Caco-2 (cell line): ENCODE measurements at regions of chr11 and their contacts with region 1.

Region 1: GRCh38 chr11:62591448-62592145 is at the start of gene TUT1:
- DNase-seq: peak; percentile 98
- H3K4me3 ChIP-seq: peak within 1 kb of the TSS; percentile 51
- H3K4me3 Mint-ChIP-seq: peak within 1 kb of the TSS; percentile 88
- H3K27ac Mint-ChIP-seq: peak within 1 kb of the TSS; percentile 95
- H3K4me1 ChIP-seq: peaks cover 36% of the 10 kb centered on the region
- H3K4me1 Mint-ChIP-seq: peaks cover 18% of the 10 kb centered on the region
- H3K27me3 ChIP-seq: no peaks in the 10 kb centered on the region
- H3K27me3 Mint-ChIP-seq: no peaks in the 10 kb centered on the region
- CTCF ChIP-seq: no peak
- total RNA-seq, gene TUT1: 27.2 and 30.2 TPM in 2 replicates

Region 2: GRCh38 chr11:62394825-62395538 is 196.6 kb before region 1 on chr11:
- CTCF ChIA-PET with region 1: interaction called, 10 read pairs
- POLR2A ChIA-PET with region 1: interaction called, 13 read pairs
- intact Hi-C with region 1: no loop called
- DNase-seq: peak; percentile 72 to 80
- H3K4me3 ChIP-seq: no peak overlapping the region
- H3K4me3 Mint-ChIP-seq: no peak overlapping the region
- H3K27ac Mint-ChIP-seq: peak overlapping the region; percentile 38
- H3K4me1 ChIP-seq: peaks cover 65% of the 10 kb centered on the region
- H3K4me1 Mint-ChIP-seq: peaks cover 32% of the 10 kb centered on the region
- H3K27me3 ChIP-seq: no peaks in the 10 kb centered on the region
- H3K27me3 Mint-ChIP-seq: no peaks in the 10 kb centered on the region
- CTCF ChIP-seq: peak; percentile 66 to 74

Region 3: GRCh38 chr11:62551696-62552250 is 39.8 kb before region 1 on chr11:
- CTCF ChIA-PET with region 1: interaction called, 12 read pairs
- POLR2A ChIA-PET with region 1: interaction called, 11 read pairs
- intact Hi-C with region 1: no loop called
- DNase-seq: peak; percentile 74 to 77
- H3K4me3 ChIP-seq: no peak overlapping the region
- H3K4me3 Mint-ChIP-seq: peak overlapping the region; percentile 71
- H3K27ac Mint-ChIP-seq: peak overlapping the region; percentile 96
- H3K4me1 ChIP-seq: peaks cover 87% of the 10 kb centered on the region
- H3K4me1 Mint-ChIP-seq: peaks cover 61% of the 10 kb centered on the region
- H3K27me3 ChIP-seq: no peaks in the 10 kb centered on the region
- H3K27me3 Mint-ChIP-seq: no peaks in the 10 kb centered on the region
- CTCF ChIP-seq: no peak

Region 4: GRCh38 chr11:62612366-62613290 is 21.0 kb after region 1 on chr11 and contains the starts of genes EML3 and ROM1:
- CTCF ChIA-PET with region 1: interaction called, 19 read pairs
- POLR2A ChIA-PET with region 1: interaction called, 6 read pairs
- intact Hi-C with region 1: loop called (anchors 1 kb)
- DNase-seq: peak; percentile 93
- H3K4me3 ChIP-seq: peak within 1 kb of the TSS; percentile 87
- H3K4me3 Mint-ChIP-seq: peak within 1 kb of the TSS; percentile 97
- H3K27ac Mint-ChIP-seq: peak within 1 kb of the TSS; percentile 93
- H3K4me1 ChIP-seq: peaks cover 30% of the 10 kb centered on the region
- H3K4me1 Mint-ChIP-seq: peaks cover 33% of the 10 kb centered on the region
- H3K27me3 ChIP-seq: no peaks in the 10 kb centered on the region
- H3K27me3 Mint-ChIP-seq: no peaks in the 10 kb centered on the region
- CTCF ChIP-seq: peak; percentile 99
- total RNA-seq, gene EML3: 61.2 and 68.7 TPM in 2 replicates
- total RNA-seq, gene ROM1: 1.1 and 1.3 TPM in 2 replicates

Region 5: DNA sequence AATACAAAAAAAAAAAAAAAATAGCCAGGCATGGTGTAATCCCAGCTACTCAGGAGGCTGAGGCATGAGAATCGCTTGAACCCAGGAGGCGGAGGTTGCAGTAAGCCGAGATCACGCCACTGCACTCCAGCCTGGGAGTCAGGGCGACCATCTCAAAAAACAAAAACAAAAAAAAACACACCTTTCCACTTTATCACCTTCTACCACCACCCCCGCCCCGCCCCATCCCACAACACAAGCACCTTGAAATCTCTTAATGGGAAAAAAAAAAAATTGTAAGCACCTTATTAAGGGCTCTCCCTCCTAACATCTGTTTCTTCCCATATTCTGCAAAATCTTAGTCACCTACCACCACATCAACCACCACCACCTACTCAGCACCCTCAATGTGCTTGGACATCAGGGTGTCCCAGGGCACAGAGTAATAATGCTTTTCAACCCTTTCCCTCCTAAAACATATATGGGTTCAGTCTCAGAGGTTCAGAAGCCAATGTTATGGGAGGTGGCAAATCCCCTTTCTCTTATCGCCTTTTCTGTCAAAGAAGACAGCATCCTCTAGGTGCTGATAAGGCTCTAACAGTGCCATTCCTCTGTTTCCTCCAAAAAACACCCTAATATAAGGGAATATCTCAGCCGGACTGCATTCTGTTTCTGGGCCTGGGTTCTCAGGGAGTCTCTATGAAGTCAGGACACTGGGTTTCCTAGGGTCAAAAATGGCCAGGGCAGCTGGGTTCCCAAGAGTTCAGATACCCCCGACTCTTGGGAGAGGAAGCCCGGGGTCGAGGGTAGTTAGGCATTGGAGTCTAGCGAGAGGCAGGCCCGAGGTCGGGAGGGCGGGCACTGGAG is 60.8 kb after region 1 on chr11:
- CTCF ChIA-PET with region 1: no interaction called
- POLR2A ChIA-PET with region 1: interaction called, 16 read pairs
- intact Hi-C with region 1: loop called (anchors 2 kb)
- DNase-seq: no peak
- H3K4me3 ChIP-seq: peak overlapping the region; percentile 80
- H3K4me3 Mint-ChIP-seq: peak overlapping the region; percentile 75
- H3K27ac Mint-ChIP-seq: peak overlapping the region; percentile 95
- H3K4me1 ChIP-seq: peaks cover 10% of the 10 kb centered on the region; the same call in 1 of the 2 replicates
- H3K4me1 Mint-ChIP-seq: peaks cover 7% of the 10 kb centered on the region
- H3K27me3 ChIP-seq: no peaks in the 10 kb centered on the region
- H3K27me3 Mint-ChIP-seq: no peaks in the 10 kb centered on the region
- CTCF ChIP-seq: no peak

Region 6: DNA sequence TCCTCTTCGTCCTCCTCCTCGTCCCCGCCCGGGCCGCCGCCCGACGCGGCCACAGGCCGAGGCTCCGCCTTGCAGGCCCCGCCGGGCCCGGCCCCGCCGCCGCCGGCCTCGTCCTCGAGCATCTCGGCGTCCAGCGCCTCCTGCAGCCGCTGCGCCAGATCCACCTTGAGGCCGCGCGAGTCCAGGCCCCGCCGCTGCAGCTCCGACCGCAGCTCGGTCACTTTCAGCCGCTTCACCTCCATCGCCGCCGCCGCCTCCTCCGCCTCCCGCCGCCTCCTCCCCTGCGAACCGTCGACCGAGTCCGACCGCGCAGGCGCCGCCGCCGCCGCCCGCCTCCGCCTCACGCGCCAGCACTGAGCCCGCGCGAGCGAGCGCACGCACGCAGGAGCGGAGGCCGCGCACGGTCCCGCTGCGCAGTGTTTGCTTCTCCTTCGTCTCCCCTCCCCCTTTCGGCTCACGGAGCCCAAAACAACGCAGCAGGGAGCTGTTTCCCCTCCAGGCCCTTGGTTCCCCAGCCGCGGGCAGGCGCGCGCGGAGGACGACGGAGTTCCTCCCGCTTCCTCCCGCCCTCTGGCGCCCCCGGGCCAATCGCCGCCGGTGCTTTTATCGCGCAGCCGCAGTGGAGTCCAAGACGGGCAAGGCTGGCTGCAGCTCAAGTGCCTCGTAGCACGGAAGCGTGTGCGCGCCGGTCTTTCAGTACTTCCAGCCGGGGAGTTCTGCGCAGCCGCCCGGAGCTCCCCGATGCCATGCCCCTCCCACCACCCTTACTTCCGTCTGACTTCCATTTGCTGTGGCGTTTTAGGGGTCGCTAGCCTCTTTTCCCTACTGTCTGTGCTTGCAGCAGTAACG is 135.5 kb after region 1 on chr11 and contains the start of gene HNRNPUL2:
- CTCF ChIA-PET with region 1: interaction called, 4 read pairs
- POLR2A ChIA-PET with region 1: interaction called, 10 read pairs
- intact Hi-C with region 1: no loop called
- DNase-seq: peak; percentile 99
- H3K4me3 ChIP-seq: peak within 1 kb of the TSS; percentile 94
- H3K4me3 Mint-ChIP-seq: peak within 1 kb of the TSS; percentile 99
- H3K27ac Mint-ChIP-seq: peak within 1 kb of the TSS; percentile 98
- H3K4me1 ChIP-seq: peaks cover 22% of the 10 kb centered on the region
- H3K4me1 Mint-ChIP-seq: peaks cover 27% of the 10 kb centered on the region
- H3K27me3 ChIP-seq: no peaks in the 10 kb centered on the region
- H3K27me3 Mint-ChIP-seq: no peaks in the 10 kb centered on the region
- CTCF ChIP-seq: no peak
- total RNA-seq, gene HNRNPUL2: 60.0 and 62.9 TPM in 2 replicates

Region 7: DNA sequence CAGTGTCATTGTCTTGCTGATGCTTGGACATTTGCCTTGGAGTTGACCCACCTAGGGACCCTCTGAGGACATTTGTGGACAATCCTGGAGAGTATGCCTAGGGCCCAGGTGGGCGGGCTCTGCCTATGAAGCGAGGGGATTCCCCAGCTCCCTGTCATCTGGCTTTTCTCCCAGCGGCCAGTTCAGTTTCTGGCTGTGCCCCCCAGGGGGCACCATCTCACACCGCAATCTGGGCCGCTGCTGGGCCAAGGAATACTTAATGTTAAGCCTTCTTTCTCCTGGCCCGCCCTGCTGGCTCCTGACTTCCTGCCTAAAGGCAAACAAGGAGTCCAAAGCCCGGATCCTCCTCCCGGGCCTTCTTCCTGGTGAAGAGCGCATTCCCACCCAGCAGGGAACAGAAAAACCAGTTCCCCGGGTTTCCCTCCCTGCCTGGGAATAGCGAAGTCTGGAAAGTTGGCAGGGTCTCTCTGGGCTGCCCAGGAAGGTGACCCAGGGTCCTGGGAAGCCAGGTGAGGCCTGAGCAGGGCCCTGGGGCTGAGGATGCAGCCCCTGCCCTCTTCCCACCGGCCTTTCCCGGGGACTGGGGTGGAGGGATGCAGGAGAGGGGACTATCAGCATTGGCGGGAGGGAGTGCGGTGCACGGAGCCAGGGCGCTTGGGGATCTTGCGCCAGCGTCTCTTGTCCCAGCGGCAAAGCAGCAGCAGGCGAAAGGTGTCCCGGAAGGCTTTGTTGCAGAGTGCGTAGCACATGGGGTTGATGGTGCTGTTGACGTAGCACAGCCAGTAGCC is 317.7 kb after region 1 on chr11:
- CTCF ChIA-PET with region 1: no interaction called
- POLR2A ChIA-PET with region 1: no interaction called
- intact Hi-C with region 1: no loop called
- DNase-seq: peak; percentile 75 to 89
- H3K4me3 ChIP-seq: no peak overlapping the region
- H3K4me3 Mint-ChIP-seq: no peak overlapping the region
- H3K27ac Mint-ChIP-seq: peak overlapping the region; percentile 48
- H3K4me1 ChIP-seq: peaks cover 9% of the 10 kb centered on the region; the same call in 1 of the 2 replicates
- H3K4me1 Mint-ChIP-seq: peaks cover 5% of the 10 kb centered on the region
- H3K27me3 ChIP-seq: no peaks in the 10 kb centered on the region
- H3K27me3 Mint-ChIP-seq: no peaks in the 10 kb centered on the region
- CTCF ChIP-seq: peak; percentile 63 to 69